HepG2 (cell line): ENCODE measurements at regions of chr4 and their contacts with region 1.

Region 1: GRCh38 chr4:142282870-142283431 is 563.1 kb downstream of the INPP4B start:
- DNase-seq: no peak
- ATAC-seq: no peak
- H3K4me3 ChIP-seq: no peak overlapping the region
- H3K27ac ChIP-seq: no peak overlapping the region
- H3K4me1 ChIP-seq: no peaks in the 10 kb centered on the region
- H3K27me3 ChIP-seq: no peaks in the 10 kb centered on the region
- CTCF ChIP-seq: no peak
- EP300 ChIP-seq: no peak
- POLR2A ChIP-seq: no peak
- RAD21 ChIP-seq: no peak

Region 2: GRCh38 chr4:142846729-142847596 is 564.0 kb after region 1 on chr4:
- CTCF ChIA-PET with region 1: no interaction called
- POLR2A ChIA-PET with region 1: no interaction called
- in situ Hi-C with region 1: no loop called
- intact Hi-C with region 1: loop called (anchors 10 kb)
- DNase-seq: peak; percentile 10
- ATAC-seq: peak; percentile 95
- H3K4me3 ChIP-seq: no peak overlapping the region
- H3K27ac ChIP-seq: no peak overlapping the region
- H3K4me1 ChIP-seq: no peaks in the 10 kb centered on the region
- H3K27me3 ChIP-seq: peaks cover 2 to 21% of the 10 kb centered on the region in 2 experiments; a peak in 4 of 5 replicates
- CTCF ChIP-seq: peak; percentile 55
- EP300 ChIP-seq: no peak
- POLR2A ChIP-seq: no peak
- RAD21 ChIP-seq: no peak